ENCODE measurements at regions of chr3 and their contacts with region 1.

Region 1: DNA sequence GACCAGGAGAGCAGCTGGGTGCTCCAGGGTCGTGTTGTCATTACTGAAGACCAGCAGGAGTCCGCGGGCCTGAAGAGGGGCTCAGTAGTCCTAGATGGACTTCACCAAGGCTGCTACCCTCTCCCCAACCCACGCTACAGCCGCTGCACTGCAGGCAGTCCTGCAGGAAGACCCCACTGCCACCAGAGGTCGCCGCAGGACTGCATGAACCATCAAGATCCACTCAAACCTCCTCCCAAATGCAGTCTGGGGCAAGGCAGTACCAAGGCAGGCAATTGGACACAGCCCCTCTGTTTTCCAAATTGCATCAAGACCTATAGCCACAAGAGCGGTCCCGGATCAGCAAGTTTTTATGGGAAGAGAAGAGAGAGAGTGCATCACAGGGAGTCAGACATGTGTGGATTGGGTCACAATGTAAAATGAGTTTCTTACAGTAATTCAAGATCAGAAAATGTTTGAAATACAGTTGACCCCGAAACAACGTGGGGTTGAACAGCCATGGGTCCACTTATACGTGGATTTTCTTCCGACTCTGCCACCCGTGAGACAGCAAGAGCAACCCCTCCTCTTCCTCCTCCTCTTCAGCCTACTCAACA is 46.7 kb downstream of the DZIP1L start:
- DNase-seq: peak; percentile 59
- H3K4me3 Mint-ChIP-seq: no peak overlapping the region
- H3K27ac Mint-ChIP-seq: no peak overlapping the region
- H3K4me1 Mint-ChIP-seq: peaks cover 25% of the 10 kb centered on the region
- H3K27me3 Mint-ChIP-seq: peaks cover 16% of the 10 kb centered on the region

Region 2: GRCh38 chr3:137988152-137988551 is 80.5 kb before region 1 on chr3:
- intact Hi-C with region 1: loop called (anchors 1 kb)
- DNase-seq: no peak
- H3K4me3 Mint-ChIP-seq: no peak overlapping the region
- H3K27ac Mint-ChIP-seq: no peak overlapping the region
- H3K4me1 Mint-ChIP-seq: no peaks in the 10 kb centered on the region
- H3K27me3 Mint-ChIP-seq: no peaks in the 10 kb centered on the region

Region 3: DNA sequence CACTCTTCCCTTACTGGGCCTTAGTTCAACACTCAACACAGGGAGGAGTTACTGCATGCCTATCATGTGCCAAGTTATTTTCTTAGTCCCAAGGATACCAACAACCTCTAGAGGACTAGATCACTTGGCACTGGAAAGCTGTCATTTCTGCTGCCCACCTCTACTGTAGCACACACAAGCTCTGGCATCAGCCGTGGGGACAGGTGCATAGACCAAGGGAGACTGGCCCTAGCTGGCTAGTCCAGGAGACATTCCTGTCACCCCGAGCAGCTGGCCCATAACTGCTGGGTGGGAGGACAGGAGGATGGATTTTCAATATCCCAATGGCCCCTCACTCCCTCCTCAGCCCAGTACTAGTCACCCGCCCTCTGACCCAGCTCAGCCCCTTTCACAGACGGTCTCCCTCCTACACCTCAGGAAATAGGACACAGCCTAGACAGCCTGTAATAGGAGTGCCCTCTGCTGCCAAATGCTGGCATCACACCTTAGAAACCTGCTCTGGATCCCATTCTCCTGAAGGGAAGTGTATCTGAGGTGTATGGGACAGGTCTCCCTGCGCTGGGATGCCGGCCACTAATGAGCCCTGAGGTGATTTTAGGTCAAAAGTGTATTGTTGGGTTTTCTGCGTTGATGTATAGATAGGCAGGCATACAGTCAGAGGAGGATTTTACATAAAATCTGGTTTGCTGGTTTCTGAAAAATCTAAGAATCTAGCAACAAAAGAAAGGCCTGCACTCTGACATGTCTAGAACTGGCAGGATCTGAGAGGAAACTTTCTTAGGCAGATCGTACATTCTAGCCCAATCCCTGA is 50.1 kb after region 1 on chr3:
- intact Hi-C with region 1: loop called (anchors 1 kb)
- DNase-seq: peak; percentile 34
- H3K4me3 Mint-ChIP-seq: no peak overlapping the region
- H3K27ac Mint-ChIP-seq: no peak overlapping the region
- H3K4me1 Mint-ChIP-seq: peaks cover 14% of the 10 kb centered on the region
- H3K27me3 Mint-ChIP-seq: peaks cover 27% of the 10 kb centered on the region

Region 4: DNA sequence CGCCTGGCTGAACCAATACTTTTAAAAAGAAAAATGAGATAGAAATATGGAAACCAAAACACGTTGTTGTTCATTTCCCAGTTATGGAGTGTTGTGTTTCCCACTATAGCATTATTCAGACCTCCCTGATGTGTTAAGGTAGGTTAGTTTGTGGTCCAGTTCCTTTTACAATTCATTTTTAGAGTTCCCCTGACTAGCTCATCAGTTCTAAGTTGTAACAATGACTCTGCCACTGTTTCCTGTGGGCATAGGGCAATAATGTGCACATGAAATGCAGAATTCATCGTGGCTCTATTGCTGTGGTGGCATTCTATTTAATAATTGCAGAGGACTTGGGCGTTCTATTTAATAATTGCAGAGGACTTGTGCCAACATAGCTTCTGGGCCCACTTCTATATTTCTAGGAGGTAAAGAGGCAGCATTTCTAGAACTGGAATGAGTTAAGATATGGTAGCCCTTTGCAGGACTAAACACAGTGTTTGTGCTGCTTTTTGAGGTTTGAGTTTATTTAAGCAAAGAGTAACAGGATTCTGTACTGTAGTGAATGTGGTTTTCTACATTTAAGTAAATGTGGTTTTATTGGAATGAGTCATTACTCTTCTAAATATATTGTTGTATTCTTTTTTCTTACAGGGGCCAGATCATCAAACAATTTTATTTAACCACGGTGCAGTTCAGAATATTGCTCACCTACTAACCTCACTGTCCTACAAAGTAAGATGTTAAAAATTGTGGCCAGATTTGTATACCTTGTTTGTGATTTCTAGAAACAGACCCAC is 165.9 kb after region 1 on chr3:
- intact Hi-C with region 1: loop called (anchors 5 kb)
- DNase-seq: no peak
- H3K4me3 Mint-ChIP-seq: no peak overlapping the region
- H3K27ac Mint-ChIP-seq: no peak overlapping the region
- H3K4me1 Mint-ChIP-seq: peaks cover 10% of the 10 kb centered on the region
- H3K27me3 Mint-ChIP-seq: no peaks in the 10 kb centered on the region

Region 5: GRCh38 chr3:138347960-138348753 is 279.5 kb after region 1 on chr3 and contains the start of gene MRAS:
- intact Hi-C with region 1: loop called (anchors 1 kb)
- DNase-seq: no peak
- H3K4me3 Mint-ChIP-seq: peak within 1 kb of the TSS; percentile 93
- H3K27ac Mint-ChIP-seq: peak within 1 kb of the TSS; percentile 69
- H3K4me1 Mint-ChIP-seq: peaks cover 12% of the 10 kb centered on the region
- H3K27me3 Mint-ChIP-seq: peaks cover 36% of the 10 kb centered on the region
- total RNA-seq, gene MRAS: 0.05 and 0.42 TPM in 2 replicates

Region 6: DNA sequence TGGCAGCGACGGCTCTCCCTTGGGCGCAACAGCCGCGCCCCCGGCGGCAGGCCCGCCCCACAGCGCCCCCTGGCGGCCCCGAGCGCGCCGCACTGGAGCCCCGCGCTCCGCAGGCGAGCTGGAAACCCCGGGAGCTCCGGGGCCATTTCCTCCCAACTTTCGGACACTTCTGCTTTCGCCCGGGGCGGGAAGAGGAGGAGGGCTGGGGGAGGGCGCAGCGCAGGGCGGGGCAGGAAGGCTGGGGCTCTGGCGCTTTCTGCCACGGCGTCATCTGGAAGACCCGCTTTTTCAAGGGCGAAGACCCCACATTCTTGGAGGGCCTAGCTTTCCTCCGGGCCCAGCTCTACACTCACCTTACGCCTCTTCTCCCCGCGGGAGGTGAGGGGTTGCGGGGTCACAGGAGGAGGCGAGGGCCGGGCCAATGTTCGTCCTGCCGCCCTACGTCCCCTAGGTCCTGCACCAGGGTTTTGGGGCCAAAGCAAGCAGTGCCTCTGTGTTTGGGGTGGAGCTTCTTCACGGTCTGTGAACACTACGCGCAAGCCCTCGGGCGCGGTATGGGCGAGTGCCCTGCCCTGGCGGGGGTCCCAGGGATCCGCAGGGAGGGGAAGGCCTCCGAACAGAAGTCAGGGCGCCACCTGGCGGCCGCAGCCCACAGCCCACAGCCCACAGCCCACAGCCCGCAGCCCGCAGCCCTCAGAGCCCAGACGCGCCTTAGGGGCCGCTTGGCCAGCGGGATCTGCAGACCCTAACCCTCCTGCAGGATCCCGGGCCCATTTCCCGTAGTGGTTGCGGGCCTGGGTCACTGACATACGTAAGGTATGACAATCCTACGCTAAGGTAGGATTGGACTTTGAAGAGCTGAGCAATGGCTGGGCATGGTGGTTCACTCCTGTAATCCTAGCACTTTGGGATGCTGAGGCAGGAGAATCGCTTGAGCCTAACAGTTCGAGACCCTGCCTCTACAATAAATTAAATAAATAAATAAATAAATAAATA is 847.1 kb after region 1 on chr3:
- intact Hi-C with region 1: loop called (anchors 2 kb)
- DNase-seq: peak; percentile 68
- H3K4me3 Mint-ChIP-seq: peak overlapping the region; percentile 86
- H3K27ac Mint-ChIP-seq: peak overlapping the region; percentile 71
- H3K4me1 Mint-ChIP-seq: peaks cover 6% of the 10 kb centered on the region
- H3K27me3 Mint-ChIP-seq: peaks cover 16% of the 10 kb centered on the region

Measured in activated T-helper 1 cell treated with anti-CD3 and anti-CD28 coated beads, Interleukin-12 subunit alpha, Interleukin-12 subunit beta, Interleukin-2, Interleukin-4 antibody, amounts not matched to agents 30 ng/mL and 10 ng/mL and 1 ng/mL, durations not matched to agents 14 hours and 24 hours and 36 hours (primary cell).